Activated B cell treated with CpG ODN at 0.5 μM for 24 hours (primary cell): ENCODE measurements at regions of chr2 and their contacts with region 1.

Region 1: GRCh38 chr2:223914324-223914723 is 30.8 kb downstream of the WDFY1 start:
- DNase-seq: no peak
- ATAC-seq: no peak
- H3K4me3 Mint-ChIP-seq: no peak overlapping the region
- H3K27ac Mint-ChIP-seq: no peak overlapping the region
- H3K4me1 Mint-ChIP-seq: peaks cover 26% of the 10 kb centered on the region
- H3K27me3 Mint-ChIP-seq: no peaks in the 10 kb centered on the region
- CTCF ChIP-seq: no peak

Region 2: GRCh38 chr2:223929571-223930102 is 15.3 kb after region 1 on chr2:
- CTCF ChIA-PET with region 1: no interaction called
- POLR2A ChIA-PET with region 1: no interaction called
- intact Hi-C with region 1: loop called (anchors 2 kb)
- DNase-seq: no peak
- ATAC-seq: no peak
- H3K4me3 Mint-ChIP-seq: no peak overlapping the region
- H3K27ac Mint-ChIP-seq: peak overlapping the region; percentile 56
- H3K4me1 Mint-ChIP-seq: peaks cover 54% of the 10 kb centered on the region
- H3K27me3 Mint-ChIP-seq: no peaks in the 10 kb centered on the region
- CTCF ChIP-seq: no peak